ENCODE measurements at regions of chr15 and their contacts with region 1.

Region 1: DNA sequence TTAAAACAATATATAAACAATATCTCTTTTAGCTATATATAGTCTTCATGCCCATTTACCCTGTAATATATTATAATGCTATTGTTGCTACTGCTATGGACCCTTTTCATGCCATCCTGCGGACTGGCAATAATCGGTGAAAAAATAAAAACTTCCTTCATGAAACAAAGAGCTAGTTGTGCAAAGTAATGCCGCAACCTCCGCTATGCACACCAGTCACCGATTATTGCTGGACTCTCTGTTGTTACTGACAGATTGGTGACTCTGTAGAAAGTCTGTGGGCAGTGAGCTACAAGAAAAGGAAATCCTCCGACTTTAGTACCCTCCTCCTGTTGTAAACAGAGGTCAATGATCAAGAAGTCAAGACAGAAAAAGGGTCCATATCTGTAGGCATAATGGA is 17.9 kb upstream of the ICE2 start:
- DNase-seq: no peak
- ATAC-seq: no peak
- H3K4me3 Mint-ChIP-seq: no peak overlapping the region
- H3K27ac Mint-ChIP-seq: no peak overlapping the region
- H3K4me1 Mint-ChIP-seq: peaks cover 12% of the 10 kb centered on the region; the same call in 1 of the 2 replicates
- H3K27me3 Mint-ChIP-seq: no peaks in the 10 kb centered on the region
- CTCF ChIP-seq: no peak

Region 2: GRCh38 chr15:60428935-60429334 is 67.9 kb before region 1 on chr15:
- CTCF ChIA-PET with region 1: no interaction called
- POLR2A ChIA-PET with region 1: no interaction called
- DNase-seq: no peak
- ATAC-seq: no peak
- H3K4me3 Mint-ChIP-seq: no peak overlapping the region
- H3K27ac Mint-ChIP-seq: no peak overlapping the region
- H3K4me1 Mint-ChIP-seq: peaks cover 2% of the 10 kb centered on the region; the same call in 1 of the 2 replicates
- H3K27me3 Mint-ChIP-seq: no peaks in the 10 kb centered on the region
- CTCF ChIP-seq: no peak

Region 3: GRCh38 chr15:60507596-60508424 is 11.0 kb after region 1 on chr15:
- CTCF ChIA-PET with region 1: interaction called, 12 read pairs
- POLR2A ChIA-PET with region 1: no interaction called
- DNase-seq: no peak
- ATAC-seq: peak; percentile 79
- H3K4me3 Mint-ChIP-seq: no peak overlapping the region
- H3K27ac Mint-ChIP-seq: no peak overlapping the region
- H3K4me1 Mint-ChIP-seq: peaks cover 6% of the 10 kb centered on the region
- H3K27me3 Mint-ChIP-seq: no peaks in the 10 kb centered on the region
- CTCF ChIP-seq: peak; percentile 77

Measured in WTC11 (cell line).